CD4-positive, alpha-beta memory T cell (primary cell): ENCODE measurements at regions of chr2 and their contacts with region 1.

Region 1: GRCh38 chr2:105114551-105114950 is 76.7 kb downstream of the MRPS9 start:
- DNase-seq: peak in 4 of 5 donors; percentile 10 to 29 (median 21)
- H3K4me3 ChIP-seq: no peak overlapping the region
- H3K4me3 Mint-ChIP-seq: no peak overlapping the region
- H3K27ac ChIP-seq: no peak overlapping the region
- H3K27ac Mint-ChIP-seq: no peak overlapping the region
- H3K4me1 ChIP-seq: no peaks in the 10 kb centered on the region
- H3K4me1 Mint-ChIP-seq: no peaks in the 10 kb centered on the region
- H3K27me3 ChIP-seq: no peaks in the 10 kb centered on the region
- H3K27me3 Mint-ChIP-seq: no peaks in the 10 kb centered on the region

Region 2: DNA sequence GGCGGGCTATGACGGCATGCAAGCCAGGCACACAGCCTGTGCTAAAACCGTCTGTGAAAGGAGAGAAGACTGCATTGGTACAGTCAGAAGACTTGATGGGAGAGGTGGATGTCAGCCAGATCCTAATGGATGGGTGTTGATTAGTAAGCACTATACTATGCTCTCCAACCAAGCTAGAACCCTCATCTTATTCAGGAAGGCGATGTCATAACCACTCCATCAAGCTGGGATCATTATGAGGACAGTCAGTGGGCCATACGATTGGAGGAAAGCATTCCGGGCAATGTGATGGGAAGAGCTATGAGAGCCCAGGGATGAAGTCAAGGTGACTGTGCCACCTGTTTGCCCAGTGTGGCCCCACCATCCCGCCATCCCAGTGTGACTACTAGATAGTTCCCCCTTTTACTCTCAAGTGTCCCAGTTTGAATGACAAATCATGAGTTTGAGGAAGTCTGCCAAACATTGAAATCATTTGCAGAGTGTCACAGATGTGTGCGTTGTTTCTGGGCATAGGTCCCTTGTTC is 10.3 kb before region 1 on chr2:
- CTCF ChIA-PET with region 1: interaction called, 16 read pairs
- POLR2A ChIA-PET with region 1: no interaction called
- intact Hi-C with region 1: no loop called
- DNase-seq: no peak
- H3K4me3 ChIP-seq: no peak overlapping the region
- H3K4me3 Mint-ChIP-seq: no peak overlapping the region
- H3K27ac ChIP-seq: no peak overlapping the region
- H3K27ac Mint-ChIP-seq: no peak overlapping the region
- H3K4me1 ChIP-seq: no peaks in the 10 kb centered on the region
- H3K4me1 Mint-ChIP-seq: peaks cover 0 to 4% (median 0%) of the 10 kb centered on the region in 4 donors
- H3K27me3 ChIP-seq: no peaks in the 10 kb centered on the region
- H3K27me3 Mint-ChIP-seq: no peaks in the 10 kb centered on the region

Region 3: GRCh38 chr2:105139556-105140239 is 25.1 kb after region 1 on chr2:
- CTCF ChIA-PET with region 1: interaction called, 13 read pairs
- POLR2A ChIA-PET with region 1: no interaction called
- intact Hi-C with region 1: no loop called
- DNase-seq: no peak
- H3K4me3 ChIP-seq: no peak overlapping the region
- H3K4me3 Mint-ChIP-seq: no peak overlapping the region
- H3K27ac ChIP-seq: no peak overlapping the region
- H3K27ac Mint-ChIP-seq: no peak overlapping the region
- H3K4me1 ChIP-seq: peaks cover 3% of the 10 kb centered on the region
- H3K4me1 Mint-ChIP-seq: peaks cover 3 to 13% (median 5%) of the 10 kb centered on the region in 4 donors
- H3K27me3 ChIP-seq: peaks cover 5% of the 10 kb centered on the region
- H3K27me3 Mint-ChIP-seq: peaks cover 29 to 39% of the 10 kb centered on the region in 2 donors

Region 4: GRCh38 chr2:105235388-105236054 is 121.0 kb after region 1 on chr2:
- CTCF ChIA-PET with region 1: interaction called, 112 read pairs
- POLR2A ChIA-PET with region 1: no interaction called
- intact Hi-C with region 1: loop called (anchors 1 kb)
- DNase-seq: peak in 4 of 5 donors; percentile 20 to 29 (median 26)
- H3K4me3 ChIP-seq: no peak overlapping the region
- H3K4me3 Mint-ChIP-seq: peak overlapping the region in 1 of 8 donors; percentile 20
- H3K27ac ChIP-seq: no peak overlapping the region
- H3K27ac Mint-ChIP-seq: peak overlapping the region in 1 of 7 donors; percentile 82
- H3K4me1 ChIP-seq: peaks cover 12% of the 10 kb centered on the region
- H3K4me1 Mint-ChIP-seq: peaks cover 5 to 22% (median 13%) of the 10 kb centered on the region in 4 donors
- H3K27me3 ChIP-seq: no peaks in the 10 kb centered on the region
- H3K27me3 Mint-ChIP-seq: peaks cover 11% of the 10 kb centered on the region in 2 donors